GM13977 (cell line): ENCODE measurements at regions of chr3 and their contacts with region 1.

Region 1: DNA sequence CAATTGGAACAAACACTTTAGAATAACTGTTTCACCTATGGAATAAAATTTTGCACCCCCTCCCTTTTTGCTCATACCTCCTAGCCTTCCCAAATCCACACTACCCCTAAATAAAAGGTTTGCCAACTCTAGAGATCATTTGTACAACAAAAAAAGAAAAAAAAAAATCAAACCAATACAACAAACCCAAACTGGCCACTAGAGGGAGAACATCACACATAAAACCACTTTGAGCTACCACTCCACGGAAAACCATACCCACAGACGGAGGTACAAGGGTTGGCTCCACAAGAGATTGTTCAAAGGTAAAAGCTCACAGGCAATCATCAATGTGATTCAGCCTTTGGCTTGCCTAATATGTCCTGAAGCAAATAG is 47.6 kb downstream of the SETMAR start:
- DNase-seq: peak; percentile 66
- CTCF ChIP-seq: peak; percentile 68

Region 2: DNA sequence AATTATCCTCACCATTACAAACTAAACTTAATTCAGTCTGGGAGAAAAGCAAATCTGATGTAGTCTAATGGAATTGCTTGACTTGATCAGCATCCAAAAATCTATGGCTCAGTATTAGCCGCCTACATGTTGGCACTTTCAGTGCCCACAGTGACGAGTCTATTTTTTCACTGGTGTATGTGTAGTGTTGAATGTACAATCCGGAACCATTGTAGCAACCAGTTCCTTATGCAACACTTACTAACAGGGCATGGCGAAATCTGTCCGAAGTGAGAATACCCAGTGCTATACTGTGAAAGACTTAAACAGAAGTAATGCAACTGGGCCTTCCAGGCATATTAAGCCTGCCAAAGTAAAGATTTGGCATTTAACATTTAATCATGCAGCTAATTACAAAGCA is 532.9 kb before region 1 on chr3:
- in situ Hi-C with region 1: no loop called
- DNase-seq: no peak
- CTCF ChIP-seq: no peak

Region 3: GRCh38 chr3:3984053-3984452 is 366.7 kb before region 1 on chr3:
- in situ Hi-C with region 1: no loop called
- DNase-seq: no peak
- CTCF ChIP-seq: no peak

Region 4: GRCh38 chr3:4633078-4634004 is 282.6 kb after region 1 on chr3:
- in situ Hi-C with region 1: loop called (anchors 10 kb)
- DNase-seq: peak; percentile 62
- CTCF ChIP-seq: peak; percentile 81

Region 5: GRCh38 chr3:5568458-5568857 is 1217.7 kb after region 1 on chr3:
- in situ Hi-C with region 1: no loop called
- DNase-seq: no peak
- CTCF ChIP-seq: peak; percentile 30